CD8-positive, alpha-beta T cell (primary cell): ENCODE measurements at regions of chr10 and their contacts with region 1.

Region 1: GRCh38 chr10:86585037-86585725 is 63.6 kb upstream of the WAPL start:
- DNase-seq: peak; percentile 43 to 86 (median 73)
- ATAC-seq: peak; percentile 98
- H3K4me3 ChIP-seq: no peak overlapping the region
- H3K4me3 Mint-ChIP-seq: no peak overlapping the region
- H3K27ac ChIP-seq: no peak overlapping the region
- H3K27ac Mint-ChIP-seq: no peak overlapping the region
- H3K4me1 ChIP-seq: peaks cover 6% of the 10 kb centered on the region
- H3K4me1 Mint-ChIP-seq: peaks cover 3% of the 10 kb centered on the region
- H3K27me3 ChIP-seq: no peaks in the 10 kb centered on the region
- H3K27me3 Mint-ChIP-seq: peaks cover 4% of the 10 kb centered on the region
- CTCF ChIP-seq: peak; percentile 93

Region 2: GRCh38 chr10:85194706-85195105 is 1390.5 kb before region 1 on chr10:
- CTCF ChIA-PET with region 1: no interaction called
- POLR2A ChIA-PET with region 1: no interaction called
- intact Hi-C with region 1: no loop called
- DNase-seq: no peak
- ATAC-seq: no peak
- H3K4me3 ChIP-seq: no peak overlapping the region
- H3K4me3 Mint-ChIP-seq: no peak overlapping the region
- H3K27ac ChIP-seq: no peak overlapping the region
- H3K27ac Mint-ChIP-seq: no peak overlapping the region
- H3K4me1 ChIP-seq: no peaks in the 10 kb centered on the region
- H3K4me1 Mint-ChIP-seq: no peaks in the 10 kb centered on the region
- H3K27me3 ChIP-seq: no peaks in the 10 kb centered on the region
- H3K27me3 Mint-ChIP-seq: peaks cover under 1% of the 10 kb centered on the region
- CTCF ChIP-seq: no peak

Region 3: GRCh38 chr10:86261941-86262687 is 323.1 kb before region 1 on chr10:
- CTCF ChIA-PET with region 1: no interaction called
- POLR2A ChIA-PET with region 1: no interaction called
- intact Hi-C with region 1: loop called in 1 of 2 experiments (anchors 5 kb)
- DNase-seq: peak in 2 of 9 experiments; percentile 12 to 42
- ATAC-seq: no peak
- H3K4me3 ChIP-seq: no peak overlapping the region
- H3K4me3 Mint-ChIP-seq: no peak overlapping the region
- H3K27ac ChIP-seq: no peak overlapping the region
- H3K27ac Mint-ChIP-seq: no peak overlapping the region
- H3K4me1 ChIP-seq: no peaks in the 10 kb centered on the region
- H3K4me1 Mint-ChIP-seq: peaks cover 7% of the 10 kb centered on the region
- H3K27me3 ChIP-seq: no peaks in the 10 kb centered on the region
- H3K27me3 Mint-ChIP-seq: peaks cover 31% of the 10 kb centered on the region
- CTCF ChIP-seq: no peak

Region 4: GRCh38 chr10:86393401-86393800 is 191.8 kb before region 1 on chr10:
- CTCF ChIA-PET with region 1: interaction called, 118 read pairs
- POLR2A ChIA-PET with region 1: no interaction called
- intact Hi-C with region 1: no loop called
- DNase-seq: peak in 1 of 9 experiments; percentile 13
- ATAC-seq: no peak
- H3K4me3 ChIP-seq: no peak overlapping the region
- H3K4me3 Mint-ChIP-seq: no peak overlapping the region
- H3K27ac ChIP-seq: no peak overlapping the region
- H3K27ac Mint-ChIP-seq: no peak overlapping the region
- H3K4me1 ChIP-seq: no peaks in the 10 kb centered on the region
- H3K4me1 Mint-ChIP-seq: peaks cover 7% of the 10 kb centered on the region
- H3K27me3 ChIP-seq: peaks cover 0 to 2% of the 10 kb centered on the region in 2 experiments
- H3K27me3 Mint-ChIP-seq: peaks cover 7% of the 10 kb centered on the region
- CTCF ChIP-seq: no peak

Region 5: GRCh38 chr10:86535057-86535882 is 49.9 kb before region 1 on chr10:
- CTCF ChIA-PET with region 1: interaction called, 4 read pairs
- POLR2A ChIA-PET with region 1: no interaction called
- intact Hi-C with region 1: loop called in 1 of 2 experiments (anchors 1 kb)
- DNase-seq: peak in 5 of 9 experiments; percentile 13 to 58 (median 37)
- ATAC-seq: no peak
- H3K4me3 ChIP-seq: peak overlapping the region in 1 of 2 experiments; percentile 32
- H3K4me3 Mint-ChIP-seq: peak overlapping the region; percentile 62
- H3K27ac ChIP-seq: no peak overlapping the region
- H3K27ac Mint-ChIP-seq: peak overlapping the region; percentile 64
- H3K4me1 ChIP-seq: peaks cover 22% of the 10 kb centered on the region
- H3K4me1 Mint-ChIP-seq: peaks cover 33% of the 10 kb centered on the region
- H3K27me3 ChIP-seq: no peaks in the 10 kb centered on the region
- H3K27me3 Mint-ChIP-seq: no peaks in the 10 kb centered on the region
- CTCF ChIP-seq: no peak